HepG2 (cell line): ENCODE measurements at regions of chr10 and their contacts with region 1.

Region 1: DNA sequence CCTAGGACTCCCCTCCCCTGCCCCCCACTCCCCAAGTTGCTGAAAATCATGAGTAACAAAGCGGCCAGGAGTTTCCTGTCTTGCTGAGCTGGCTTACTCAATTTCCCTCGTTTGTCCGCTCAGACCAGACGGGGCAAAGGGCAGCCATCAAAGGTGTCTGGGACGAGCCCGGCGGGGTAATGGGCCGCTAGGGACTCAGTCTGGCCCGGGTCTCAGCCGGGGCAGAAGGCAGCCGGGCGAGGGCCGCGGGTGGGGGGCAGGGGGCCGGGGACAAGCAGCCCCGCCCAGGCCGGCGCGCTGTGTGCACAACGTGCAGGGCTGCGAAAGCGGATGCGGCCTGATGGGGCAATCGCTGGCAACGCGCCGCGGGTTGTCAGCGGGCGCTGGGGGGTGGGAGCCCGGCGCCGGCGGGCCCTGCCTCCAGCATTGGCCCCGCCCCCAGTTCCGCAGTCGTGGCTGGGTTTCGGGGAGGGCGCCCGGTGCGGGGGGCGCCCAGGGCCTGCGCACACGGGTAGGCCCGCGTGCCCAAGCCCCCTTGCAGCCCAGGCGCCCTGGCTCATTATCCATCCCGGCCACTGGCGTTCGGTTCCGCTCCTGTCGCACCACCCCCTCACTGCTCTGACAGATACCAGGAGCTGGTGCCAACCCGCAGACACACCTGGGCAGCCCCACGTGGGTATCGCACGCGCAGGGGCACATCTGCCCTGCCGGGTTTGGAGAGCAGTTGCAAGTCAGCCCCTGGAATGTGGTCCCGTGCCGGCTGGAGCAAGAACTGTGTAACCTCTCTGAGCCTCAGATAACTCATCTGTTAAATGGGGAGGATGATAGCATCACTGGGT is 35.1 kb downstream of the DNAJB12 start:
- DNase-seq: peak; percentile 86
- ATAC-seq: peak; percentile 72
- H3K4me3 ChIP-seq: peak overlapping the region; percentile 54 to 75 (median 55)
- H3K27ac ChIP-seq: peak overlapping the region; percentile 98
- H3K4me1 ChIP-seq: peaks cover 94% of the 10 kb centered on the region
- H3K27me3 ChIP-seq: no peaks in the 10 kb centered on the region
- CTCF ChIP-seq: no peak; the same call in 1 of the 2 replicates
- EP300 ChIP-seq: peak in 1 of 2 experiments; percentile 87; a peak in 3 of 4 replicates
- POLR2A ChIP-seq: peak in 1 of 2 experiments; percentile 51; a peak in 1 of 4 replicates
- RAD21 ChIP-seq: peak; percentile 42

Region 2: DNA sequence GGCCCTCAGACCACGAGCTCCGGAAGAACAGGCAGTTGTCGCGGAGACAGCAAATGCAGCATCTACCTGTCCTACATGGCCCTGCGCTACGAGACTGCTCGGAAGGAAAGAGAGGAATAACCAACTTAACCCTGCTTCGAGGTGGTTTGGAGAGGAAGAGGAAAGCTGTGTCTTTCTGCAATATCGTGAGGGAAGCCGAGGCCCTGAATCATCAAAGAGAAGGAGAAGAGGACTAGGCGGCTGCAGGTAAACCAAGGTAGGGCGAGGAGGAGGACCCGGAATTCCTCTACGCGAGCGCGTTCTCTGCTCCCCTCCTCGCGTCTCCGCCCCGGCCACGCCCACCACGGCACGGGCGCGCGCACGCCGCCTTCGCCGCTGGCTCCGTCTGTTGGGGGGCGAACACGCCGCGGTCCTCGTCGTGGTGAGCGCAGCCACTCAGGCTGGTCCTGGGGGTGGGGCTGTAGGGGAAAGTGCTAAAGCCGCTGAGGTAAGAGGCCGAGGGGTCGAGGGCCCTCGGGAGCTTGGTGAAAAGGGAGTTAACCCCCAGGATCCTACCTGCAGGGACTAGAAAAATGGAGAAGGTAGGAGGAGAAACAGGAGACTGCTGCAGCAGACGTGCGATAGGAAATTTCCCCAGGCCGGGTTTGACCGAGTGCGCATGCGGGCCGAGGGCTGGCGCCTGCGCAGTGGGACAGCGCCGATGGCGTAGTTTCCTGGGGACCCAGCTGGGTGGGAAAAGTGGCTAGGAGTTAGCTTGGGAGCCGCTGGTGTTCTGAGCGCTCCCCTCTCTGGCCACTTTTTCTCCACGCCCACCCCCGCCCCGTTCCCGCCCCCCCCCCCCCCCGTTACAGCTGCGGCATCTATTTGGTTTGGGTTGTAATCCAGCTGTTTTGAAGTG is 103.7 kb before region 1 on chr10 and contains the starts of genes ANAPC16 and ASCC1:
- CTCF ChIA-PET with region 1: no interaction called
- POLR2A ChIA-PET with region 1: interaction called, 19 read pairs
- in situ Hi-C with region 1: no loop called
- intact Hi-C with region 1: loop called (anchors 10 kb)
- DNase-seq: peak; percentile 85
- ATAC-seq: peak; percentile 93
- H3K4me3 ChIP-seq: peak within 1 kb of the TSS; percentile 82 to 98 (median 83)
- H3K27ac ChIP-seq: peak within 1 kb of the TSS; percentile 99
- H3K4me1 ChIP-seq: peaks cover 54% of the 10 kb centered on the region
- H3K27me3 ChIP-seq: no peaks in the 10 kb centered on the region
- CTCF ChIP-seq: peak; percentile 27; the same call in 1 of the 2 replicates
- EP300 ChIP-seq: peak; percentile 31 to 61; a peak in 2 of 4 replicates
- POLR2A ChIP-seq: peak; percentile 94 to 96
- RAD21 ChIP-seq: peak; percentile 44; the same call in 1 of the 2 replicates
- total RNA-seq, gene ANAPC16: 74.8 and 95.6 TPM in 2 replicates
- total RNA-seq, gene ASCC1: 30.1 and 51.0 TPM in 2 replicates

Region 3: GRCh38 chr10:72248468-72249151 is 71.0 kb before region 1 on chr10:
- CTCF ChIA-PET with region 1: no interaction called
- POLR2A ChIA-PET with region 1: interaction called, 13 read pairs
- in situ Hi-C with region 1: no loop called
- intact Hi-C with region 1: no loop called
- DNase-seq: peak; percentile 68
- ATAC-seq: peak; percentile 84
- H3K4me3 ChIP-seq: peak overlapping the region; percentile 56 to 75 (median 65)
- H3K27ac ChIP-seq: peak overlapping the region; percentile 81
- H3K4me1 ChIP-seq: peaks cover 94% of the 10 kb centered on the region
- H3K27me3 ChIP-seq: no peaks in the 10 kb centered on the region
- CTCF ChIP-seq: 0 out of 2 replicates have a peak, but pooled peaks have one; percentile 8
- EP300 ChIP-seq: no peak
- POLR2A ChIP-seq: peak; percentile 88 to 95
- RAD21 ChIP-seq: 0 out of 2 replicates have a peak, but pooled peaks have one; percentile 6

Region 4: DNA sequence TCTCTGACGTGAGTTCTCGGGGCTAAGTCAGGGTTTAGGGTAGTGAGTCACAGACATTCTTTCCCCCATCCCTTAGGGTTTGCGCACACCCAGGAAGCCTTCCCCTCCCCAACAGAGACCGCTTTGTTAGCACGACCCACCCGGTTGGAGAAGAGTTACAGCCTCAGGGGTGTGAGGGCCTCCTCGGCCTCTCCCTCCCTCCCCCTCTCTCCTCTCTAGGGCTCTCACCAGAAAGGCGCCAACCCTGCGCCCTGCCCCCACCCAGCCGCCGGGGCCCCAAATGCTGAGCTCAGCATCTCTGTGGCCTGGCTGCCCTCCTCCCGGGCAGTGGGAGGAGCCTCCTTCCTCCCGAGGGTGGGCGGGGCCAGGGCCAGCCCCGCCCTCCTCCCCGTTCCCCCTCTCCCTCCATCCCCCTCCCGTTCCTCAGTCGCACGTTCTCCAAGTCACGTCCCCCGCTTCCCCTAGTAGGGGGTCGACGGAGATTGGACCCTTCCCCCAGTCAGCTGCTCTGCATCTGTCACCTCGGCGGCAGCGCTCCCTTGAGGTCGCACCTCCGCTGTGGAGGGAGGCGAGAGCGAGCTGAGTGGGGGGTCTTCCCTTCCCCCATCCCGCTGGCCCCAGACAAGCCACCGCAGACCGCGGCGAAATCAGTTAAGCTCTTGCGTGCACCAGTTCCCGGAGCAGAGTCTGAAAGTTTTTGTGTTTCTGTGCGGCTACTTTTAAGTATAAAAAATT is 58.9 kb before region 1 on chr10:
- CTCF ChIA-PET with region 1: no interaction called
- POLR2A ChIA-PET with region 1: interaction called, 53 read pairs
- in situ Hi-C with region 1: no loop called
- intact Hi-C with region 1: no loop called
- DNase-seq: peak; percentile 88
- ATAC-seq: peak; percentile 84
- H3K4me3 ChIP-seq: peak overlapping the region; percentile 50 to 74 (median 61)
- H3K27ac ChIP-seq: peak overlapping the region; percentile 91
- H3K4me1 ChIP-seq: peaks cover 84% of the 10 kb centered on the region
- H3K27me3 ChIP-seq: no peaks in the 10 kb centered on the region
- CTCF ChIP-seq: peak; percentile 85
- EP300 ChIP-seq: peak in 1 of 2 experiments; percentile 56; a peak in 1 of 4 replicates
- POLR2A ChIP-seq: peak; percentile 11 to 55; a peak in 2 of 4 replicates
- RAD21 ChIP-seq: no peak

Region 5: GRCh38 chr10:72331601-72332422 is 12.2 kb after region 1 on chr10:
- CTCF ChIA-PET with region 1: no interaction called
- POLR2A ChIA-PET with region 1: interaction called, 70 read pairs
- in situ Hi-C with region 1: no loop called
- intact Hi-C with region 1: no loop called
- DNase-seq: peak; percentile 91
- ATAC-seq: peak; percentile 82
- H3K4me3 ChIP-seq: peak overlapping the region; percentile 13 to 65 (median 22); a peak in 4 of 6 replicates
- H3K27ac ChIP-seq: peak overlapping the region; percentile 91
- H3K4me1 ChIP-seq: peaks cover 95% of the 10 kb centered on the region
- H3K27me3 ChIP-seq: no peaks in the 10 kb centered on the region
- CTCF ChIP-seq: peak; percentile 54
- EP300 ChIP-seq: peak in 1 of 2 experiments; percentile 44; a peak in 1 of 4 replicates
- POLR2A ChIP-seq: no peak
- RAD21 ChIP-seq: no peak

Region 6: GRCh38 chr10:72390764-72391163 is 71.1 kb after region 1 on chr10:
- CTCF ChIA-PET with region 1: no interaction called
- POLR2A ChIA-PET with region 1: no interaction called
- in situ Hi-C with region 1: no loop called
- intact Hi-C with region 1: no loop called
- DNase-seq: no peak
- ATAC-seq: no peak
- H3K4me3 ChIP-seq: no peak overlapping the region
- H3K27ac ChIP-seq: no peak overlapping the region
- H3K4me1 ChIP-seq: 0 out of 2 replicates have a peak, but pooled peaks cover 4% of the 10 kb centered on the region
- H3K27me3 ChIP-seq: no peaks in the 10 kb centered on the region
- CTCF ChIP-seq: no peak
- EP300 ChIP-seq: no peak
- POLR2A ChIP-seq: no peak
- RAD21 ChIP-seq: no peak